ENCODE measurements at regions of chr2 and their contacts with region 1.

Region 1: DNA sequence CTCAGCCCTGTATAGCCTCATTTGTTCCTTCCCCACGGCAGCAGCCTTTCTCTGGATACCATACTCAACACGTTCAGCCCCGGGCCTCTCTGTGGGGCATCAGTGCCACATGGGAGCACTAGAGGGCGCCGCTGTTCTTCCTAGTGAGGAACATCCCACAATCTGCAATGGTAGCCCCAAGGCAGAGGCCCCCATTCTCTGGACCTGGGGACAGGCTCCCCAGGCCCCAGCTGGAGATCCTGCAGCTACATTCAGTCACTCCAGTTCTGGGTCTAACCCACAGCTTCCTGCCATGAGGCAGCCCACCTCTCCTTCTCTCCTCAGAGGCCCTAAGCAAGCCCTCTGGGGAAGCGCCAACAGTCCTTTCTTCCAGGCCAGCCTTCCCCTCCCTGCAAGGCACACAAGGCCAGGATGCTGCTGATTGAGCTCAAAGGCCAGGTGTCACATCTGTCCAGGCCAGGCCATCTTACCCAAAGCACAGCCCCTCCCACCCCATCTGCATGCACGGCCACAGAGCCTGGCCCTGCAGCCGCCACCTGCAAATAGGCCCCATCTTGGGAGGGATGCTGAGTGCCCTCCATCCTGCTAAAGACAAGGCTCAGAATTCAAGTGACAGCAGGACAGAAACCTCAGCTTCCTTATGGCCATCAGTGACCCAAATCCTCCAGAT is 14.3 kb upstream of the SFXN5 start:
- DNase-seq: peak; percentile 67
- H3K27ac ChIP-seq: peak overlapping the region; percentile 86
- CTCF ChIP-seq: peak; percentile 93

Region 2: GRCh38 chr2:72862239-72862988 is 223.4 kb before region 1 on chr2:
- CTCF ChIA-PET with region 1: no interaction called
- POLR2A ChIA-PET with region 1: no interaction called
- DNase-seq: peak; percentile 95
- H3K27ac ChIP-seq: no peak overlapping the region
- CTCF ChIP-seq: peak; percentile 97

Region 3: GRCh38 chr2:73112913-73113633 is 27.2 kb after region 1 on chr2 and contains the start of gene RAB11FIP5:
- CTCF ChIA-PET with region 1: interaction called, 10 read pairs
- POLR2A ChIA-PET with region 1: interaction called, 3 read pairs
- DNase-seq: peak; percentile 75
- H3K27ac ChIP-seq: peak within 1 kb of the TSS; percentile 95
- CTCF ChIP-seq: no peak

Region 4: DNA sequence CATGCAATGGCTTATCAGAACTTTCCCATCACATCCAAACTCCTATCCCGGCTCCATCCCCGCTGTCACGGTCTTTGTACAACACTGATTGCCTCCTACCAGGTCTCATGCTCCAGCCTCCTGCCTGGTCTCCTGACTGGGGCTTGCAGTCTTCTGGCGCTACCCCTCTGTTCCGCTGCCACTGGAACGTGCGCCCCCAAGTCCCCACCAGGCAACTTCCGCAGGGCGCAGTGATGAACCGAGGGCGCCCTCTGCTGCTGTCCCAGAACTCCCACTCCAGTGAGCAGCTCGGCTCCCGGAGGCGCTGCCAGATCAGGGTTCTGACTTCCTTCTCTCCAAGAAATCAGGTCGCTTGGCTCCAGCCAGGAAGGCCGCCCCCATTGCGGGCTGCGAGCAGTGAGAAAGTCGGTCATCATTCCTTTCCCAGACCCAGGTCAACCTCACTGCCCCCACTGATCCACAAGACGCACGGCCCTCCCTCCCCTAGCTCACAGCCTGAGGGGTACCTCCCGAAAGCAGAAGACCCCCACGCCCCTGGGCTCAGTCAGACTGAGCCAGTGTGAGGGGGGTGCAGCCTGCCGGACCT is 70.8 kb after region 1 on chr2:
- CTCF ChIA-PET with region 1: interaction called, 14 read pairs
- POLR2A ChIA-PET with region 1: no interaction called
- DNase-seq: no peak
- H3K27ac ChIP-seq: no peak overlapping the region
- CTCF ChIP-seq: peak; percentile 65

Region 5: GRCh38 chr2:73163483-73164367 is 77.9 kb after region 1 on chr2:
- CTCF ChIA-PET with region 1: interaction called, 14 read pairs
- POLR2A ChIA-PET with region 1: no interaction called
- DNase-seq: peak; percentile 86
- H3K27ac ChIP-seq: no peak overlapping the region
- CTCF ChIP-seq: peak; percentile 83

Measured in RWPE1 (cell line).